ENCODE measurements at regions of chr4 and their contacts with region 1.

Region 1: GRCh38 chr4:10018818-10019461 is 2.4 kb downstream of the SLC2A9 start:
- DNase-seq: peak; percentile 93
- H3K4me3 Mint-ChIP-seq: peak overlapping the region; percentile 84
- H3K27ac Mint-ChIP-seq: peak overlapping the region; percentile 93
- H3K4me1 Mint-ChIP-seq: peaks cover 6% of the 10 kb centered on the region
- H3K27me3 Mint-ChIP-seq: no peaks in the 10 kb centered on the region

Region 2: DNA sequence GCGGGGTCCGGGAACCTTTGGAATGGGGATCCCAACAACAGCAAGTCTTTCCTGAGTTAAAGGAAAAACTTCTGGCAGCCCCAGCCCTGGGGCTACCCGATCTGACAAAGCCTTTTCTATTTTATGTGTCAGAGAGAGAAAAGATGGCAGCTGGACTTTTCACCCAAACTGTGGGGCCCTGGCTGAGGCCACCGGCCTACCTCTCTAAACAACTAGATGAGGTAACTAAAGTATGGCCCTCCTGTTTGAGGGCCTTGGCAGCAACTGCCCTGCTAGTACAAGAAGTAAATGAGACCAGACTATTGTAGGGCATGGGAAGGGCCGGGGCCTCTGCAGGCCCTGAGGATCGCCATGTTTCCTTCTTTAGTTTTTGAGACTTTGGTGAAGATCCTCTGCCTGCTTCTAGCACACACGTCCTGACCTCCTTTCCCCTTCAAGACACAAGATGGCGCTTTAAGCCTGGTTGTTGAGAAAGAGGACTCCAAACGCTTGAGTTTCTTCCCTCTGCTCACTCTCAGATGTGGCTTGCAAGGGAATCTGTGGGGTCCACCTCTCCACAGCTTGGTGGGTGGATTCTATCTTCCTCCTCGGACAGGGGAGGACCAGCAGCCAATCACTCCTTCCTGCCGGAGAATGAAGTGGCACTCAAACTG is 256.0 kb before region 1 on chr4:
- intact Hi-C with region 1: loop called (anchors 1 kb)
- DNase-seq: peak; percentile 40
- H3K4me3 Mint-ChIP-seq: no peak overlapping the region
- H3K27ac Mint-ChIP-seq: no peak overlapping the region
- H3K4me1 Mint-ChIP-seq: no peaks in the 10 kb centered on the region
- H3K27me3 Mint-ChIP-seq: peaks cover 12% of the 10 kb centered on the region

Region 3: GRCh38 chr4:10045481-10045880 is 26.5 kb after region 1 on chr4:
- intact Hi-C with region 1: no loop called
- DNase-seq: no peak
- H3K4me3 Mint-ChIP-seq: no peak overlapping the region
- H3K27ac Mint-ChIP-seq: no peak overlapping the region
- H3K4me1 Mint-ChIP-seq: peaks cover 9% of the 10 kb centered on the region
- H3K27me3 Mint-ChIP-seq: peaks cover 4% of the 10 kb centered on the region

Region 4: DNA sequence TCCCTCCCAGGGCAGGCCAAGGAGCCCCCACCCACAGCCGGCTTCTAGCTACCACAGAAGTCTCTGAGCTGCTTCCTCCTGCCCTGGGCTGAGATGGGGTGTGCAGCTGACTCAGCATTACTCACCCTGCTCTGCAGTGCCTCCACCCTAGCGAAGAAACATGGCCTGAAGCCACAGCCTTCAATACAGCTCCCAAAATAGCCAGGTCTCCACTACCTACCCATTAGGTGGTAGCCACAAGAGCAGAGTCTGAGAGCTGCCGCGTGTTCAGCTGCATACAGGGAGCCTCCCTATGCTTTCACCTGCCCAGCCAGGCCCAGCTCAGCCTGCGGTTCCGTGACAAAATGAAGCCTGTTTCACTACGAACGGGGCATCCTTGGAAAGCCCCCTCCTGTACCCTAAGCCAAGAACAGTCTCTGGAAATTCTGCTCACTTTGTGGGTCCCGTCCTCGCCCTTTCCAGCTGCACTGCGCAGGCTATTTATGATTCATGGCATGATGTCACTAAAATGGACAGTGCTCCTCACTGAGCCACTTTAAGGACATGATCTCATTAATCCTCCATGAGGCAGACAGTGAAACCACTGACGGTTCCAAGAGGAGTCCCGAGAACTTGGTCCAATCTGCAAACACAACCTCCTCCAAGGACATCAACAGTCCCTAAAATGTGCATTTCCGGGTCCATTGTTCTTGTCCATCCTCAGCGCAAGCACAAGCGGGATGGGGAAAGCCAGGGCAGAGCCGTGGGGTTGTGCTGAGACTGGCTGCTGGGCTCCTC is 77.4 kb after region 1 on chr4:
- intact Hi-C with region 1: loop called (anchors 2 kb)
- DNase-seq: peak; percentile 73
- H3K4me3 Mint-ChIP-seq: peak overlapping the region; percentile 5
- H3K27ac Mint-ChIP-seq: peak overlapping the region; percentile 92
- H3K4me1 Mint-ChIP-seq: peaks cover 86% of the 10 kb centered on the region
- H3K27me3 Mint-ChIP-seq: no peaks in the 10 kb centered on the region

Region 5: DNA sequence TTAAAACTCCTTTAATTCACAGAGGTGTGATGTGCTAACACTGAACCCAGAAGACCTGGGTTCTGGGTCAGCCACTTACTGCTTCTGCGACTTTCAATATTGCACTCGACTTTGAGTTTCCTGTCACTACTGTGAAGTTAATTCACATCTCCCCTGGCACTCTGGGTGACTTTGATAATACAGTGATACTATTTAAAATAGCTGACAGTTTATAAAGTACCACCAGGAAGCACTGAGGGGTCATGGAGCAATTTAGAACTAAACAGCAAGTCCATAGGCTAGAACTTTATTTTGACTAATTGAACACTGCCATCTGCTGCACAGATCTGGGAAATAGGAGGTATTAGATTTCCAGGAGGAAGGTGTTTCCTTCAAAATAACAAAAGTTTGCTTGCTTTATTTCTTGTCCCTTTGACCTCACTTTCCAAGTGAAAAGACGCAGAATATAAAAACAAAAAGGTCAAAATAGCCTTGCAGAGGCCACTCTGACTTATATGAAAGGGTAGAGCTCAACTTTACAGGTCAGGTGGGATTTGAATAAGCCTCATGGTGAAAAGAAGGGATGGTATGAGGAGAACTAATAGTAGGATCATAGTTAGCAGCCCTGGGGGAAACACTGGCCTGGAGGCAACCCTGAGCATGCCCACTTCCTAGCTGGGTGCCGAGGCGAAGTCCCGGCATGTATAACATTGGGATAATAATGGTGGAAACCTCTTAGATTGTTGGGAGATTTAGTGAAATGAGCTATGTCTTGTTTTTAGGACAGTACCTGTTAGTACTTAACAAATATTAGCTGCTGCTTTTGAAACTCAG is 384.9 kb after region 1 on chr4:
- intact Hi-C with region 1: loop called (anchors 5 kb)
- DNase-seq: no peak
- H3K4me3 Mint-ChIP-seq: no peak overlapping the region
- H3K27ac Mint-ChIP-seq: no peak overlapping the region
- H3K4me1 Mint-ChIP-seq: no peaks in the 10 kb centered on the region
- H3K27me3 Mint-ChIP-seq: no peaks in the 10 kb centered on the region

Region 6: GRCh38 chr4:10535912-10536311 is 517.0 kb after region 1 on chr4:
- intact Hi-C with region 1: loop called (anchors 5 kb)
- DNase-seq: no peak
- H3K4me3 Mint-ChIP-seq: no peak overlapping the region
- H3K27ac Mint-ChIP-seq: no peak overlapping the region
- H3K4me1 Mint-ChIP-seq: no peaks in the 10 kb centered on the region
- H3K27me3 Mint-ChIP-seq: peaks cover 9% of the 10 kb centered on the region